ENCODE measurements at regions of chr3 and their contacts with region 1.

Region 1: GRCh38 chr3:44870381-44871078 is 3.9 kb upstream of the TGM4 start:
- DNase-seq: no peak
- H3K4me3 ChIP-seq: no peak overlapping the region
- H3K27ac ChIP-seq: no peak overlapping the region
- H3K4me1 ChIP-seq: no peaks in the 10 kb centered on the region
- H3K27me3 ChIP-seq: no peaks in the 10 kb centered on the region
- CTCF ChIP-seq: no peak

Region 2: DNA sequence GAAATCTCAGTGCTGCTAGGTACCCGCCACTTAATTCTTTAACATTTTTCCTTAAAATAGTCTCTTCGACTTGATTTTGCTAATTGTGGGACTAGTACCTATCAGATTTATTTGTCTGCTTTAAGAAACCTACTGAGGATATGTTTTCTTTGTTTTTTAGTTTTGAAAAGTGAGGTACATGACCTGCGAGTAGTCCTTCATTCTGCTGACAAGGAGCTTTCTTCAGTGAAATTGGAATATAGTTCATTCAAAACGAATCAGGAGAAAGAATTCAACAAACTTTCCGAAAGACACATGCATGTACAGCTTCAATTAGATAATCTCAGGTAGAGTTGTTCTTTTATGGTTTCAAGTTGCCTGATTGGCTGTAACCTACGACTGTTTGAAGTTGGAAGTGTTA is 55.8 kb before region 1 on chr3:
- CTCF ChIA-PET with region 1: no interaction called
- dilution Hi-C with region 1: loop called (anchors 5 kb)
- in situ Hi-C with region 1: no loop called
- intact Hi-C with region 1: no loop called
- DNase-seq: no peak
- H3K4me3 ChIP-seq: no peak overlapping the region
- H3K27ac ChIP-seq: no peak overlapping the region
- H3K4me1 ChIP-seq: no peaks in the 10 kb centered on the region
- H3K27me3 ChIP-seq: no peaks in the 10 kb centered on the region
- CTCF ChIP-seq: no peak